Activated T-helper 1 cell treated with anti-CD3 and anti-CD28 coated beads, Interleukin-12 subunit alpha, Interleukin-12 subunit beta, Interleukin-2, Interleukin-4 antibody, amounts not matched to agents 30 ng/mL and 10 ng/mL and 1 ng/mL, durations not matched to agents 14 hours and 24 hours and 36 hours (primary cell): ENCODE measurements at regions of chr1 and their contacts with region 1.

Region 1: DNA sequence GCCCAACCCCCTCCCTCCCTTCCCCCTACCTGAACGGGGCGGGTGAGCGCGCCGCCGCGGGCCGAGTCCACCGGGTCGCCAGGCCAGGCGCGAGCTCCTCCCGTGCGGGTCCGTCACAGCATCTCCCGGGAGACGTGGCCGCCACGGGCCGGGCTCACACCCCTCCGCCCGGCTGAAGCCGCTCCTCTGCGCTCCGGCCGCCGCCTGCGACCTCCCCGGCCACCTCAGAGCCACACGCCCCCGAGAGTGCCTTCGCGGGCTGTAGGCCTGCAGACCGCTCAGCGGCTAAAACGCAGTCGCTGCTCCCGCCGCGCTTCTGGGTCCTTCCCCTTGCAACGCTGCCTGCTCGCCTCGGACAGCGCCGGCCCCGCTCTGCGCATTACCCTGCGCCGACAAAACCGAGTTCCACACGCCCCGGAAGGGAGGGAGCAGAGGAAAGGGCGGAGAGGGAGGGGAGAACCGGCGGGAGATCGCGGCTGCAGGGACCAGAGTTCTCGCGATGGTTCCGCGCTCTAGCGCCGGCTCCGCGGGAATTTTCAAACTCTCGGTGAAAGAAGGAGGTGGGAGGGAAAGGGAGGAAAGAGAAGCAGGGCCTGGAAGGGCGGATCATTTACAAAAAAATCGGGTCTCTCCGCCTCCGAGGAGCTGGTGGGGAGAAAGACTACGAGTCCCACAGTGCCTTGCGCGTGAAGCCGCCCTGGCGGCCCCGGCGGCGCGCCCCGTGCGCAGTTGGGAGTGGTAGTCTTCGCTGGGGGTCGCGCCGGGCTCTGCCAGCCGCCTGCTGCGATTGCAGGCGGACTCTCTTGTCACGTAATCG is at the start of gene AHCTF1:
- DNase-seq: peak; percentile 93
- H3K4me3 Mint-ChIP-seq: peak within 1 kb of the TSS; percentile 93
- H3K27ac Mint-ChIP-seq: peak within 1 kb of the TSS; percentile 97
- H3K4me1 Mint-ChIP-seq: peaks cover 24% of the 10 kb centered on the region
- H3K27me3 Mint-ChIP-seq: peaks cover 6% of the 10 kb centered on the region
- total RNA-seq, gene AHCTF1: 56.1 and 60.5 TPM in 2 replicates

Region 2: DNA sequence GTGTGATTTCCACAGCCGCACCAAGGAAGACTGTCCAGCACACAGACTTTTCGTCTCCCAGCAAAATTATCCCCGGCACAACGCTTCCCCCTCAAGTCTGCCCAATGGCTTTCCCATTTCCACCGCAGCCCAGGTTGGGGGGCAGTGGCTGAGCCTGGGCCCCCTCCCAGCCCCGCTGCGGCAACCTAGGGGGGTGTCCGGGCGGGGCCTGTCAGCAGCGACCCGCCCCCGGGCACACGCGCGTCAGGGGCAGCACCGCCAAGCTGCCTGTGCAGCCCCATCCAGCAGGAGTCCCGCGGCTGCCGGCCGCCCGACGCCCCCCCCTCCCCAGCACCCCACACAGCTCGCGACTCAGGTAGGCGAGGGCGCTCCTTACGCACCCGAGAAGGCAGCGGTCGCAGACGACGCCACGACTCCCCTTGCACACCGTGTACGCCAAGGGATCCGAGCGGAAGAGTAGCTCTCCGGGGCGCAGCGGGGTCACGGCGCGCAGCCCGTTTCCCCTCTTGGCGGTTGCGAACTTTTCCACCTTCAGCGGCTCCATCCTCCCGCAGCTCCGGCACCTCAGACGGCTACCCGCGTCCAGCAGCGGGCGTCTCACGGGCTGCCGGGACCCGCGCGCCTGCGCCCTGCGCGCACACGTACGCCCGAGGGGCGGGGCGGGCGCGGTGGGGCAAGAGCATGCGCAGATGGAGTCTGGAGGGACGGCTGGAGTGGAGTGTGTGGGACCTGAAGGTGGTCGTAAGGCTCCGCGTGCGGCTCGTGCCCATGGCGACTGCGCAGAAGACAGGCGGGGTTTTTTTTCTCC is 424.9 kb before region 1 on chr1 and contains the start of gene SMYD3:
- intact Hi-C with region 1: loop called (anchors 2 kb)
- DNase-seq: peak; percentile 71
- H3K4me3 Mint-ChIP-seq: peak within 1 kb of the TSS; percentile 97
- H3K27ac Mint-ChIP-seq: peak within 1 kb of the TSS; percentile 84
- H3K4me1 Mint-ChIP-seq: peaks cover 26% of the 10 kb centered on the region
- H3K27me3 Mint-ChIP-seq: no peaks in the 10 kb centered on the region
- total RNA-seq, gene SMYD3: 21.7 and 21.8 TPM in 2 replicates

Region 3: DNA sequence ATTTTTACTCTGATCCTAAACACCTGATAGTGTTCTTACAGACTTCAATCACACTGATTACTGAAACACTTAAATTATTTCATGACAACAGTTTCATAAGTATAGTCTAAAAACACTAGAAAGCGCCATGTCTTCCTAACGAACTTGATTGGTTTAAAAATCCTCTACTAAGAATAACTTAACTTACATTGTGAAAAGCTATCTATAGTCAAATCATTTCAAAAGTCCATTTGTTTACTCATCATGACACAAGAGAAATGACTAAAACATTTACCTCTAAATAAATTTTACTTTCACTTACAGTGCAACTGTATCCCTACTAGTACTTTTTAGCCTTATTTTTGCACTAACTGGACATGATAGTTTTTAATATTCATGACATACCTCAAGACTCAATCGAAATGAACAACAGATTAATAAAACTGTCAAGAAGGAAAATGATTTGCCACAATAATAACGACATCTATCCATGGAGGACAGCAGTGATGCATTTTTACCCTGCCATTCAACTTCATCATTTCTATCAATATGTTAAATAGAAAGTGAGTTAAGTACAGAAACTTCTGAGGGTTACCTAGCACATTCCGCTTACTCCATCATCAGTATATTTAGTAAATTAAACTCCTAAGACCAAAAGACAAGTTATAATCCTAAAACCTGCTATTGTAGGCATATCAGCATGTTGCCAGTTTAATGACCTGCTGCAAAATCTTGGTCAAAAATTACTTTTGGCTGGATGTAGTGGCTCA is 38.4 kb before region 1 on chr1:
- intact Hi-C with region 1: loop called (anchors 1 kb)
- DNase-seq: no peak
- H3K4me3 Mint-ChIP-seq: no peak overlapping the region
- H3K27ac Mint-ChIP-seq: peak overlapping the region; percentile 70
- H3K4me1 Mint-ChIP-seq: peaks cover 17% of the 10 kb centered on the region
- H3K27me3 Mint-ChIP-seq: no peaks in the 10 kb centered on the region

Region 4: DNA sequence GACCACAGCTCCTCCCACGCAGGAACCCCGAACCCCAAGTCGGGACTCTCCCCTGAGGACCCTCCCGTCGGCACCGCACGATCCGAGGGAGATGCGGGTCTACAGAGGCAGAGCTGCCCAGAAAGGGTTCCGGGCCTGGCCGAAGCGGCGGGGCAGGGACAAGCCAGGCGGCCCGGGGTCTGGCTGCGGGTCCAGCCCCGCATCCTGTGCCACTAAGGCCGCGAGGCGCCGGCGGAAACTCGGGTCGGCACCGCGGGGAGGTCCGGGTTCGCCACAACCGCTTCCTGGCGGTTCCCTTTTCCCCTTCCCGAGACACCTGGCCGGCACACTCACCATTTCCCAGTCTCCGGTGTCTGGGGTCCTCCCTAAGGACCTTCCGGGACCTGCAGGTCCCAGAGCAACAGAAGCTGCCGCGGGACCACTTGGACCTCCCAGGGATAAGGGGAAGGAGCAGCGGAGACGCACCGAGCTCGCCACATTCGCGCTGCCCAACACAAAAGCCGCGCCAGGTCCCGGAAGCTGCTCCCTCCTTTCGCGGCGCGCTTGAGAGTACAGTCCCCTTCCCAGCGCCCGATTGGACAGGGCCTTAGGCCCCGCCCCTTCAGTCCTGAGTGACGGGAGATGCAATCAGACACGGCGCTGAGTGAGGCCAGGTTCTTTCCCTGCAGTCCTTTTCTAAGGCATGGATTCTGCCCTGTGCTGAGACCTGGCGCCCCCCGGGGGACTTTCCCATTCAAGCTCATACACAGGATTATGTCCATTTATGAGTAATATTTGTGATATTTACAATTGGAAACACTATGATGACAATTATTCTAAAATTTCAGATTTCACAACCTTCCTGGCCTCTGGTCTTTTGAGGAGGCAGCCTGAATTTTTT is 146.7 kb after region 1 on chr1 and contains the start of gene ZNF670:
- intact Hi-C with region 1: loop called (anchors 1 kb)
- DNase-seq: peak; percentile 81
- H3K4me3 Mint-ChIP-seq: peak within 1 kb of the TSS; percentile 89
- H3K27ac Mint-ChIP-seq: peak within 1 kb of the TSS; percentile 75
- H3K4me1 Mint-ChIP-seq: peaks cover 25% of the 10 kb centered on the region
- H3K27me3 Mint-ChIP-seq: peaks cover 2% of the 10 kb centered on the region
- total RNA-seq, gene ZNF670: 2.5 and 2.9 TPM in 2 replicates

Region 5: DNA sequence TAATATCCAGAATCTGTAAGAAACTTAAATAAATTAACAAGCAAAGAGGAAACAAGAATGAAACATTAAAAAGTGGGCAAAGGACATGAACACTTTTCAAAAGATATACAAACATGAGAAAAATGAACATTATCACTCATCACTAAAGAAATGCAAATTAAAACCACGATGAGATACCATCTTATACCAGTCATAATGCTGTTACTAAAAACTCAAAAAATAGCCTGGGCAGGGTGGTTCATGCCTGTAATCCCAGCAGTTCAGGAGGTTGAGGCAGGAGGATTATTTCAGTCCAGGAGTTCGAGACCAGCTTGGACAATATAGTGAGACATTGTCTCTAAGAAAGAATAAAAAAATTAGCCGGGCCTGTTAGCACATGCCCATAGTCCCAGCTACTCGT is 233.9 kb after region 1 on chr1:
- intact Hi-C with region 1: loop called (anchors 5 kb)
- DNase-seq: no peak
- H3K4me3 Mint-ChIP-seq: no peak overlapping the region
- H3K27ac Mint-ChIP-seq: no peak overlapping the region
- H3K4me1 Mint-ChIP-seq: peaks cover 11% of the 10 kb centered on the region
- H3K27me3 Mint-ChIP-seq: no peaks in the 10 kb centered on the region

Region 6: GRCh38 chr1:247331172-247331991 is 399.6 kb after region 1 on chr1 and contains the start of gene ZNF496:
- intact Hi-C with region 1: loop called (anchors 1 kb)
- DNase-seq: peak; percentile 65
- H3K4me3 Mint-ChIP-seq: peak within 1 kb of the TSS; percentile 92
- H3K27ac Mint-ChIP-seq: peak within 1 kb of the TSS; percentile 90
- H3K4me1 Mint-ChIP-seq: peaks cover 21% of the 10 kb centered on the region
- H3K27me3 Mint-ChIP-seq: no peaks in the 10 kb centered on the region
- total RNA-seq, gene ZNF496: 13.8 and 14.8 TPM in 2 replicates